ENCODE measurements at regions of chr3 and their contacts with region 1.

Region 1: DNA sequence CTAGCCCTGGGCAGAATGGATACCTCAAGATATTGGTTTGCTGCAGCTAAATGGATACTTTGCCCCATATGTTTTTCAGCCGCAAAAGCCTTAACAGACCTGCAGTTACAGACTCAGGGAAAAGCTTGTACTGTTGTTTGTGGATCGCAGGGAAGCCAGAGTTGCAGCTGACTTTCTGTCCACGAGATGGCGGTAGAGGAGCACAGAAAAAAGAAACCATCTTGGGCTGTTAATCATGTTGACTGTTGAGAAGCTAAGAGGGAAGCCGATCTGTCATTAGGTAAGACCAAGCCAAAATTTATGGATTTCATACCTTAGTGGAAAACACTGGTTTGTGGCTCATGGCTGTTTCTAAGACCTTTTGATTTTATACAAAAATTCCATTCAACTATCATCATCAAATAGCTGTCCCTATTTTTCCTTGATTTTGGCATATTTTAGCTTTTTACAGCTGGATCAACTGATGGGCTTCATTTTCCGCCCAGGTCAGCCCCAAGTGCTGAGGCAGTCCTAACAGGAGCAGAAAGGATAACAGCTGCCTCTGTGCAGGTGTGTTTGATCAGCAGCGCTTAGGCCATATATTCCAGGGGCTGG is 205.7 kb upstream of the ZPLD1 start:
- DNase-seq: peak; percentile 61
- ATAC-seq: peak; percentile 78
- H3K4me3 ChIP-seq: no peak overlapping the region
- H3K27ac ChIP-seq: no peak overlapping the region
- H3K4me1 ChIP-seq: peaks cover 6% of the 10 kb centered on the region; the same call in 1 of the 2 replicates
- H3K27me3 ChIP-seq: no peaks in the 10 kb centered on the region
- CTCF ChIP-seq: peak; percentile 89 to 93 (median 91)
- EP300 ChIP-seq: no peak
- POLR2A ChIP-seq: no peak
- RAD21 ChIP-seq: peak; percentile 98

Region 2: DNA sequence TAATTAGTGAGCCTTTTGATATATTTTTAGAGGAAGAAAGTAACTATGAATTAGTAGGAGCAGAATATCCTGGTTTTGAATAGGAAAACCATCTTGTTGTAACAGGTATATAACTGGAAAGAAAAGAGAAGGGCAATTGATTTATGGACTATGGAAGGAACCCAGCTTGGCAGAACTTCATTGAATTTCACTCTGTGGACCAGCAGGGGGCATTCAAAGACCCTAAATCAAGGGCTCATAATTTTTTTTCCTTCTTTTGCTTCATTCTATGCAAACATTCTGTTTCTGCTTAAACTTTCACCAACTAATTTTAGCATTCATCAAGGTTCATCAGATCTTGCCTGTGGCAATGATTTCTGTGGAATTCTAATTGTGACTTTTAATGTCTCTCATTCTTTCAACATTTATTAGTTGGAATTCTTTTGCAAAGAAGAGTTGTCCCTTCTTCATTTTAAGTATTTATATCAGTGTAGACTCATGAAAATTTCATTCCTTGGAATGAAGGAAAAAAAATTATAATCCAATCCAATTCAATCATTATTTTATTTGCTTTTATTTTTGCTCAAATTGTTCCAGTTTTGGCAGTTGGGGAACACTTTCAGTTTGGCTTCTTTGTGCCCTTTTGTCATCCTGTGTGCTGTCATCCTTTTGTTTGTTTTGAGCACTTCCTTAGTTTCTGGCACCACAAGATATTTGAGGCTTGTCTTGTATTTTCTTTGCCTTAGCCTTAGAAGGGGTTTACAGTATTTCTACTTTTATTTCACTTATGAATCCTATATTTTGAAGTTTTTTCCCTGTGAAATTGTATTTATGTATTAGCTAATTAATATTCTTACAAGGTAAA is 419.8 kb before region 1 on chr3:
- CTCF ChIA-PET with region 1: interaction called, 1,057 read pairs
- POLR2A ChIA-PET with region 1: interaction called, 15 read pairs
- RAD21 ChIA-PET with region 1: interaction called, 659 read pairs
- SMC1A ChIA-PET with region 1: interaction called, 949 read pairs
- in situ Hi-C with region 1: loop called (anchors 5 kb)
- intact Hi-C with region 1: loop called (anchors 1 kb)
- DNase-seq: no peak
- ATAC-seq: peak; percentile 64
- H3K4me3 ChIP-seq: no peak overlapping the region
- H3K27ac ChIP-seq: no peak overlapping the region
- H3K4me1 ChIP-seq: peaks cover 15% of the 10 kb centered on the region
- H3K27me3 ChIP-seq: no peaks in the 10 kb centered on the region
- CTCF ChIP-seq: peak; percentile 56 to 84 (median 65); a peak in 5 of 6 replicates
- EP300 ChIP-seq: no peak
- POLR2A ChIP-seq: no peak
- RAD21 ChIP-seq: peak; percentile 82

Region 3: GRCh38 chr3:101854621-101855304 is 374.4 kb before region 1 on chr3:
- CTCF ChIA-PET with region 1: interaction called, 24 read pairs
- POLR2A ChIA-PET with region 1: interaction called, 3 read pairs
- RAD21 ChIA-PET with region 1: interaction called, 26 read pairs
- SMC1A ChIA-PET with region 1: interaction called, 24 read pairs
- in situ Hi-C with region 1: no loop called
- intact Hi-C with region 1: loop called (anchors 1 kb)
- DNase-seq: no peak
- ATAC-seq: no peak
- H3K4me3 ChIP-seq: no peak overlapping the region
- H3K27ac ChIP-seq: no peak overlapping the region
- H3K4me1 ChIP-seq: peaks cover 17% of the 10 kb centered on the region
- H3K27me3 ChIP-seq: no peaks in the 10 kb centered on the region
- CTCF ChIP-seq: no peak
- EP300 ChIP-seq: no peak
- POLR2A ChIP-seq: no peak
- RAD21 ChIP-seq: no peak

Region 4: GRCh38 chr3:101995371-101996046 is 233.7 kb before region 1 on chr3:
- CTCF ChIA-PET with region 1: interaction called, 38 read pairs
- POLR2A ChIA-PET with region 1: no interaction called
- RAD21 ChIA-PET with region 1: interaction called, 14 read pairs
- SMC1A ChIA-PET with region 1: interaction called, 27 read pairs
- in situ Hi-C with region 1: no loop called
- intact Hi-C with region 1: no loop called
- DNase-seq: no peak
- ATAC-seq: peak; percentile 26; the same call in 1 of the 3 replicates
- H3K4me3 ChIP-seq: no peak overlapping the region
- H3K27ac ChIP-seq: peak overlapping the region; percentile 22; the same call in 1 of the 2 replicates
- H3K4me1 ChIP-seq: peaks cover 29% of the 10 kb centered on the region
- H3K27me3 ChIP-seq: no peaks in the 10 kb centered on the region
- CTCF ChIP-seq: no peak
- EP300 ChIP-seq: no peak
- POLR2A ChIP-seq: no peak
- RAD21 ChIP-seq: no peak

Region 5: DNA sequence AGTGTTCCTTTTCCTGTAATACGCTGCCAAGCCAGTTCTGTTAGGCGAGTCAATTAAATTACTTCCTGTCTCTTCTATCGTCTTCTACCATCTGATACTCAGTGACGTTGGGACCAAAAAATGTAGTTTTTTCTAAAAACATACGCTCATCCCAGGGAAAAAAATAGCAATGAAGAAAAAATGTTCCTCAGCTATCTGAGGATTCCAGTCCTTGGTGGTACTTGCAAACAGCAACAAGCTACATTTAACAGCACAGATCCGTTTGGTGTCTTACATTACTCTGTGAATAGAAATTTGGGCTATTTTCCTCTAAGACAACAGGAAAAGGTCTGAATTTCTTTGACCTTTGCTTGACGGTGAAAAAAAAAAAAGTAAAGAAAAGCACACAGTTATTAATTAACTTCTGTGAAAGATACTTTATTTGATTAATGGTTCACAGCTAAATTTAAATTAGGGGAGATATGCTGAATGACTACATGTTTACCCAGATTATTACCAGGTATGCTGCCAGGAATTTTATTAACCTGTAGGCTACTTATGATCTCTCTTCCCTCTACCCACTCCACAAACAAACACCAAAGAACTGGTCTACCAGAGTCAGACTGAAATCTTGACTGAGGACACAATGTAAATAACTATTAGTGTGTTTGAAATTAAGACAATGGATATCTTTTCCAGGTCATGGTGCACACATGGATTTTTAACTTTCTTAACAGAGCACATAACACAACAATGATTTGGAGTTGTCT is 48.7 kb before region 1 on chr3:
- CTCF ChIA-PET with region 1: interaction called, 21 read pairs
- POLR2A ChIA-PET with region 1: no interaction called
- RAD21 ChIA-PET with region 1: interaction called, 5 read pairs
- SMC1A ChIA-PET with region 1: interaction called, 9 read pairs
- in situ Hi-C with region 1: no loop called
- intact Hi-C with region 1: no loop called
- DNase-seq: no peak
- ATAC-seq: peak; percentile 45
- H3K4me3 ChIP-seq: no peak overlapping the region
- H3K27ac ChIP-seq: peak overlapping the region; percentile 25
- H3K4me1 ChIP-seq: peaks cover 14% of the 10 kb centered on the region
- H3K27me3 ChIP-seq: no peaks in the 10 kb centered on the region
- CTCF ChIP-seq: no peak
- EP300 ChIP-seq: no peak
- POLR2A ChIP-seq: no peak
- RAD21 ChIP-seq: no peak

Region 6: GRCh38 chr3:102553876-102554275 is 324.7 kb after region 1 on chr3:
- CTCF ChIA-PET with region 1: interaction called, 10 read pairs
- POLR2A ChIA-PET with region 1: no interaction called
- RAD21 ChIA-PET with region 1: interaction called, 6 read pairs
- SMC1A ChIA-PET with region 1: interaction called, 3 read pairs
- in situ Hi-C with region 1: no loop called
- intact Hi-C with region 1: no loop called
- DNase-seq: no peak
- ATAC-seq: no peak
- H3K4me3 ChIP-seq: no peak overlapping the region
- H3K27ac ChIP-seq: no peak overlapping the region
- H3K4me1 ChIP-seq: no peaks in the 10 kb centered on the region
- H3K27me3 ChIP-seq: no peaks in the 10 kb centered on the region
- CTCF ChIP-seq: no peak
- EP300 ChIP-seq: no peak
- POLR2A ChIP-seq: no peak
- RAD21 ChIP-seq: no peak